Esophagus squamous epithelium (tissue), 5 donors: ENCODE measurements at regions of chr1 and their contacts with region 1.

Region 1: GRCh38 chr1:94463765-94464330 is 45.7 kb downstream of the ABCD3 start:
- DNase-seq: no peak
- H3K4me3 ChIP-seq: no peak overlapping the region
- H3K27ac ChIP-seq: peak overlapping the region in 2 of 4 donors; percentile 23 to 43
- H3K4me1 ChIP-seq: peaks cover 4 to 13% (median 5%) of the 10 kb centered on the region in 3 donors
- H3K27me3 ChIP-seq: no peaks in the 10 kb centered on the region
- CTCF ChIP-seq: peak in 5 of 6 experiments; percentile 41 to 69 (median 54)
- POLR2A ChIP-seq: no peak

Region 2: GRCh38 chr1:93925206-93925605 is 538.6 kb before region 1 on chr1:
- intact Hi-C with region 1: no loop called
- DNase-seq: no peak
- H3K4me3 ChIP-seq: no peak overlapping the region
- H3K27ac ChIP-seq: no peak overlapping the region
- H3K4me1 ChIP-seq: no peaks in the 10 kb centered on the region
- H3K27me3 ChIP-seq: no peaks in the 10 kb centered on the region
- CTCF ChIP-seq: no peak
- POLR2A ChIP-seq: no peak

Region 3: DNA sequence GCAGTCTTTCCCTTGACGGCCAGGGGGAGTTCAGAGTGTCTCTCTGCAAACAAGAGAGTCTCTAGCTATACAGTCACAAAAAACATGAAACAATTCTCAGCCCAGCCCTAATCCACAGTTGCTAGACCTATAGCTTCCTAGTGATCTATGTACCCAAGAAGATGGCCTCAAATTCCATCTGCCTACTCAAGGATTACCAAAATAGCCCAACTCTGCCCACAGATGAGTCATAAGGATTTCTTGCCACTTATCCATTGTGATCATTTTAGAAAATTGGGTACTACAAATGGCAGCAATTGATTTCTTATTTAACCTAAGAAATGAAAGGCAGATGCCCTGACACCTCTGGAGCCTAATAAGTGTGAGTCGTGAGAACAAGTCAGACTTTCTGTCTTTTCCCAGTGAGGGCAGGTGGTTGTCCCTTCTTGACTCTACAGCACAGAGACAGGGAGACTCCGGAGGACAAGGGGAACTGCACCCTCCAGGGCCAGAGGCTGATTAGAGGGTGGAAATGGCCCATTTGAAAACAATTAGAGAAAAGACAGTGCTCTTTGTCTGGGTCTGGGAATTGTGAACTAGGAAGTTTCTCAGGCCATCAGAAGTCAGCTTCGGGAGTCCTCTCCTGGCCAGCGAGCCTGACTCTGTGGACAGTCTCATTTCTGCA is 408.3 kb before region 1 on chr1:
- intact Hi-C with region 1: loop called (anchors 10 kb)
- DNase-seq: no peak
- H3K4me3 ChIP-seq: no peak overlapping the region
- H3K27ac ChIP-seq: no peak overlapping the region
- H3K4me1 ChIP-seq: no peaks in the 10 kb centered on the region
- H3K27me3 ChIP-seq: peaks cover 0 to 3% (median 0%) of the 10 kb centered on the region in 4 donors
- CTCF ChIP-seq: no peak
- POLR2A ChIP-seq: no peak

Region 4: DNA sequence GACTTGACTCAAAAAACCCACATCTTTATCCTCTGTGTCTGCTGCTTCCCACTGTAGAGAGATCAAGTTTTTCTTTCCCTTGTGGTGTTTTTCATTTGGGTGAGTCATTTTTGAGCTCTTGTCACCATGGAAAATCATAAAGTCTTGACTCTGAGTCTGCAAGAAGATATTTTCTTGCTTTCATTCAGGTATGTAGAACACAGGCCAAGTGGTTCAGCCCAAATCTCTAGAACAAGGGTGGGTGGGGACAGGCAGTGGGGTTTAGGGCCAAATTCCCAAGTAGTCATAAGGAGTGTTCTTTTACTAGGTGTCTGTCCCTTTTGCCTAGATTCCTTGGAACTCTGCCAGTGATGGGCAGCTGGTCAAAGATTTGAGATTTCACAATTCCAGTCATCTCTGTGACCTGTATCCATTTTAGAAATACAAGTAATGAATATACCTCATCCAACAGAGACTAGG is 204.9 kb before region 1 on chr1:
- intact Hi-C with region 1: no loop called
- DNase-seq: no peak
- H3K4me3 ChIP-seq: no peak overlapping the region
- H3K27ac ChIP-seq: peak overlapping the region in 3 of 4 donors; percentile 31 to 64 (median 33)
- H3K4me1 ChIP-seq: peaks cover 0 to 14% (median 3%) of the 10 kb centered on the region in 3 donors
- H3K27me3 ChIP-seq: no peaks in the 10 kb centered on the region
- CTCF ChIP-seq: no peak
- POLR2A ChIP-seq: no peak

Region 5: DNA sequence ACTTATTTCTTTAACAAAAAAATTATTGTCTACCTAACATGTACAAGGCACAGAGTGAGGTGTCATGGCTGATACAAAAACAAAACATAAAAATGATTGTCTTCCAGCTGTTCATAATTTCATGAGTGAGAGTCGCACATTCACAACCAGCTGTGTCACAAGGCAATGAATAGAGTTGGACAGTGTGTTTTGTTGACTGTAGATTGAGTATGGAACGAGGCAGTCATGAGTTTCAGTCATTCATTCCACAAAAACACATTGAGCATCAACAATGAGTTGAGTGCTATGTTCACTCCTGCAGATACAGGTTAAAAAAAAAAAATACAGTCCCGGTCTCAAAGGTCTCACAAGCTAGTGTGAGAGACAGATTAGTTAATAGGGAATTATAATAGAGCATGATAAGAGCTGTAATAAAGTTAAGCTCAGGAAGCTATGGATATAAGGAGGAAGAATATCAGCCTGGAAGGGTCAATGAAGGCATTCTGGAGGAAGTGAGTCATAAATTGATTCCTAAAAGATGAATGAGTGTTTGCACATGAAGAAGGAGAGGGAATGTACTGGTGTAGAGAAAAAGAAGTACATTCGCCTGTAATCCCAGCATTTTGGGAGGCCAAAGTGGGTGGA is 178.7 kb before region 1 on chr1:
- intact Hi-C with region 1: no loop called
- DNase-seq: no peak
- H3K4me3 ChIP-seq: no peak overlapping the region
- H3K27ac ChIP-seq: no peak overlapping the region
- H3K4me1 ChIP-seq: no peaks in the 10 kb centered on the region
- H3K27me3 ChIP-seq: no peaks in the 10 kb centered on the region
- CTCF ChIP-seq: no peak
- POLR2A ChIP-seq: no peak